ENCODE measurements at regions of chr7 and their contacts with region 1.

Region 1: GRCh38 chr7:38908759-38909335 is at the start of gene VPS41:
- DNase-seq: peak; percentile 77 to 87 (median 82)
- ATAC-seq: peak; percentile 99 to 100 (median 99)
- H3K4me3 ChIP-seq: peak within 1 kb of the TSS; percentile 64 to 85 (median 64)
- H3K27ac ChIP-seq: peak within 1 kb of the TSS; percentile 8 to 74 (median 37)
- H3K4me1 ChIP-seq: peaks cover 0 to 24% (median 13%) of the 10 kb centered on the region in 3 donors
- H3K27me3 ChIP-seq: no peaks in the 10 kb centered on the region
- CTCF ChIP-seq: no peak
- total RNA-seq, gene VPS41: 29.3 to 79.2 (median 38.9) TPM

Region 2: GRCh38 chr7:38819463-38819862 is 89.4 kb before region 1 on chr7:
- intact Hi-C with region 1: loop called in 1 of 3 experiments (anchors 10 kb)
- DNase-seq: no peak
- ATAC-seq: no peak
- H3K4me3 ChIP-seq: no peak overlapping the region
- H3K27ac ChIP-seq: no peak overlapping the region
- H3K4me1 ChIP-seq: peaks cover 0 to 2% (median 0%) of the 10 kb centered on the region in 3 donors
- H3K27me3 ChIP-seq: no peaks in the 10 kb centered on the region
- CTCF ChIP-seq: no peak

Measured in pancreas (tissue), 10 donors.